Left ventricle myocardium superior (tissue), 1 donor: ENCODE measurements at regions of chr7 and their contacts with region 1.

Region 1: DNA sequence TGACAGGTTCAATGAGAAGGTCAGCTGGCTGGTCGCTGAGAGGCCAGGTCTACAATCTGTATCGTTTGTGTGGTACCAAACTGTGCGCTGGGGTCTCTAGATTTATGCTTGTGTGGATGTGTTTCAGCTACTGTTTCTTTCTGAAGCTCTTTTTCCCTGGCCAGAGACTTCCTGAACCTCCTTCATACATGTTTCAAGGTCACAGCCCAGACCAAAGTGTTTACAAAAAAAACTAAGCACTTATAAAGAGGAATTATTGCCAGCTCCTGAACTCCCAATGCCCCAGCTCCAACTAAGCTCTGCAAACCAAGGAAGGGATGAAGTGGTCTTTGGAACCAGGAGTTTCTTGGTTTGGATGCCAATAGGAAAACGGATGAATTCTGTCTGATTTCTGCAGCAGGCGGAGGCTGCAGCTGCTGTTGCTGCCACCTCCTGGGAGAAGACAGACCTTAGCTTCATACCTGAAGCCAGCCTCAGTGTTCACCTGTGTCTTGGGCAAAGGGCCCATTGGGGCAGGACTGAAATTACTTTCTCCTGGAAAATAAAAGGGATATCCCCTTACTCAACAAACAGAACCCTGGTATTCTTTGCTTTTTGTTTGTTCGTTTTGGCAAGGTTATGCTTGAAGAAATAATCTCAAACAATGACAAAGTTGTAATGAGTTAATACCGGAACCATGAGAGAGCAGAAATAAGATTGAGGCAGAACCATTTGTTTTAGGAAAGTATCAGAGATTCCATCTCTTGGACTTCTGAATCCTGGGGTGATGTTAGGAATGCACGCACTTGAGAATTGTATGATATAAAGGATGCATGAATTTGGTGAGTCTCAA is 24.6 kb upstream of the MKLN1 start:
- DNase-seq: peak; percentile 51
- ATAC-seq: peak; percentile 47

Region 2: GRCh38 chr7:130912862-130913631 is 390.0 kb before region 1 on chr7:
- intact Hi-C with region 1: no loop called
- DNase-seq: peak; percentile 70
- ATAC-seq: peak; percentile 64

Region 3: DNA sequence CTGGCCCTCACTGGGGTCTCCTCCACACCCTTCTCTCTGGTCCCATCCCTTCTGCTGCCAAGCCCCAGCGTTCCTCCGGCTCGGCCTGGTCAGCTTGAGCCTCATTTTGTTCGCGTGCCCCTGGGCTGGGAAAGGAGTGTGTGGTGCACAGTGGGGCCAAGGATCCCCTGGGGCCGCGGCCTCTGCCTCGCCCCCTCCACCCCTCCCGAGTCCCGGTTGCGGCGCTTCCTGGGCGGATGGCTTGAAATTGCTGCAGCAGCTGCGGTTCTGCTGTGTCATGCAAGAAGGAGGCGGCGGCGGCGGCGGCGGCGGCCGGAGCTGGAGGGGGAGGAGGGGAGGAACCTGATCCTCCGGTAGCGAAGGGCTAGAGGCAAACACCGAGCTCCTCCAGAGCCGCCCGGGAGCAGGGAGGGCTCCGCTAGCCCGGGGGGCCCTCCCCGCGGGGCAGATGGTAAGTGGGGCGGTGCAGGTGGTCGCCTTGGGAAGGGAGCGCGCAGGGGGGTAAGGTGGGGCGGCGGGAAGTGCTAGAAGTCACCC is 193.3 kb before region 1 on chr7:
- intact Hi-C with region 1: loop called (anchors 10 kb)
- DNase-seq: peak; percentile 90
- ATAC-seq: peak; percentile 57